Sciatic nerve (tissue), 2 donors: ENCODE measurements at regions of chr16 and their contacts with region 1.

Region 1: GRCh38 chr16:50210266-50211038 is 55.9 kb upstream of the ADCY7 start:
- DNase-seq: peak; percentile 85
- ATAC-seq: peak; percentile 94

Region 2: DNA sequence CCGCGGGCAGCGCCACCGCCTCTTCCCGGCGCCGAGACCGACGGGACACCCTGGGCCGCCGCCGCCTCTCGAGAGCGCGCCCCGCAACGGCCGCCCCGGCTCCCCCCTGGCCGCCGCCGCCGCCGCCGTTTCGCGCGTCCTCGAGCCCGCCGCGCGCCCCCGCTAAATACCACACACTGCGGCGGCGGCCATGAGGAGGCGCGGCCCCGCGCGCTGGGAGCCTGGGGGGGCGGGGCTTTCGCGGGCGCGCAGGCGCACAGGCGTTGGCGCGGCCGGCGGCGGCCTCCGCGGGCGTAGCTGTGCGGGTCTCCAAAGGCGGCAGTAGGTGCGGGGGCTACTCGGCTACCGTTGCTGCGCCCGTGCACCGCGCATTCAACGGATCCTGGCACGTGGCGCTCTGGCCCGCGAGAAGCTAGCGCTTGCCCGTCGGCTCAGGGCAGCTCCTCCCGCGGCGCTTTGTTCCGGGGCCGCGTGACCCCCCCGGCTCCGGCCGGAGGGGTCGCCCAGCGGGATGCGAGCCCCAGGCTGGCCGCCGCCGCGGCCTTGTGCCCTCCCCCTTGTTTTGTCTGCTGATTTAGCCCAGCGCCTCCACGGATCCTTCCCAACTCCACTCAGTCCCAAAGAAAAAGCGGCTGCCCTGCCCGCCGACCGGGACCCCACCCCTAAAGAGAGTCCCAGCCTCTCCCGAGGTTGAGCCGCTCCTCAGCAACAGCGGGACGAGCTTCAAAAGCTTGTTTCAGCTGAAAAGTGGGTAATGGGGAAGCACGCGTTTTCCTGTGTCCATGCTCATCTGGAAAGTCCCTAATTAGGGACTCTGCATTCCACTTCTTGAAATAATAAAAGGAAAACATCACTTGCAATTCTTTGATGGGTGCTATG is 1824.9 kb before region 1 on chr16 and contains the start of gene SIAH1:
- intact Hi-C with region 1: no loop called
- DNase-seq: peak; percentile 92
- ATAC-seq: peak; percentile 85
- total RNA-seq, gene SIAH1: 37.2 TPM

Region 3: DNA sequence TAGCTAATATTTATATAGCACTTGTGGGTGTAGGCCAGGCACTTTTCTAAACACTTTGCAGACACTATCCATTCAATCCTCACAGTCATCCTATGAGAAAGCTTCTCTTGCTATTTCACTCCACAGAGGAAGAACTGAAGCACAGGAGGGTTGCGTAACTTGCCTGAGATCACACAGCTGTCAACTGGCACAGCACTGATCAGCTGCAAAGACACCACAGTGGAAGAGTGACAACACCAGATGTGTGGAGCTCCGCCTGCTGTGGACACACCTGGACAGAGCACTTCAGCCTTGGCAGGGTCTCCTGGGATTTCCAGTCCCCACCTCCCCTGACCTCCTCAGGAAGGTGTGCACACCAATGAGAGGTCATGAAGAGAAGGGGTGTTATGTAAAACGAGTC is 198.7 kb before region 1 on chr16:
- intact Hi-C with region 1: no loop called
- DNase-seq: no peak
- ATAC-seq: no peak

Region 4: DNA sequence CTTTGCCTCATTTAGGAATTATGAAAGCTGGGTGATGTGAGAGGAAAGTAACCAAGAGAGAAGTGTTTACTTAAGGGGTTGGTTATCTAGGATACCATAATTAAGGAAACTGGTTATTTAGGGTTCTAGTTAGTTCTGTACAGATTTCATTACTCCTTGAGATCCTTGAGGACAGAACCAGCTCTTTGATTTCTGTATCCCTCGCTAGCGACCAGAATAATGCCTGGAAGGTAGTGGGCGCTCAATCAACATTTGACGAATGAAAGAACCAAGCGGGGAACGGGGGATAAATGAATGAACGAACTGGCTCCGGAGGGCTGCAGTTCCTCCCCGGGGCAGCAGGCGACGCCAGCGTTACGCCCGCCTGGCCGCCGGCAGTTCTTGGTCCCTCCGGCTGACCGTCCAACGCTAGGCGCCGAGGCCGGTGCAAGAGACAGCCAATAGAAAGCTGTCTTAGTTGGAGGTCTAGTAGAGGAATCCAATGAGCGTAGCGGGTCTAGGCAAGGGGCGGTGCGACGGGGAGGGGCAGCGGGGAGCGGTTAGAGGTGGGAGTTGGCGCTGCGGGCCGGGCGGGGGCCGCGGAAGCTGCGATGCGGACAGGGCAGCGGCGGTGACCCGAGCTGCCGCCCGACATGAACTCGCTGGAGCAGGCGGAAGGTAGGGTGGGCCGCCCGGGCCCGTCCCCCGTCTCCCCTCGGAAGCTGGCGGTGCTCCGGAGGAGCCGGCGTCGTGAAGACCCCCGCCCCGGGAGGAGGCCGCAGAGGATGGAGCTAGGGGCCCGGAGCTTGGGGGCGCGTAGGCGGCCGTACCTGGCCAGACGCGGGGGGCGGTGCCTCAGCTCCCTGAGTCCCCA is 185.5 kb before region 1 on chr16 and contains the start of gene CNEP1R1:
- intact Hi-C with region 1: loop called (anchors 10 kb)
- DNase-seq: peak; percentile 96
- ATAC-seq: peak; percentile 100
- total RNA-seq, gene CNEP1R1: 21.7 TPM

Region 5: DNA sequence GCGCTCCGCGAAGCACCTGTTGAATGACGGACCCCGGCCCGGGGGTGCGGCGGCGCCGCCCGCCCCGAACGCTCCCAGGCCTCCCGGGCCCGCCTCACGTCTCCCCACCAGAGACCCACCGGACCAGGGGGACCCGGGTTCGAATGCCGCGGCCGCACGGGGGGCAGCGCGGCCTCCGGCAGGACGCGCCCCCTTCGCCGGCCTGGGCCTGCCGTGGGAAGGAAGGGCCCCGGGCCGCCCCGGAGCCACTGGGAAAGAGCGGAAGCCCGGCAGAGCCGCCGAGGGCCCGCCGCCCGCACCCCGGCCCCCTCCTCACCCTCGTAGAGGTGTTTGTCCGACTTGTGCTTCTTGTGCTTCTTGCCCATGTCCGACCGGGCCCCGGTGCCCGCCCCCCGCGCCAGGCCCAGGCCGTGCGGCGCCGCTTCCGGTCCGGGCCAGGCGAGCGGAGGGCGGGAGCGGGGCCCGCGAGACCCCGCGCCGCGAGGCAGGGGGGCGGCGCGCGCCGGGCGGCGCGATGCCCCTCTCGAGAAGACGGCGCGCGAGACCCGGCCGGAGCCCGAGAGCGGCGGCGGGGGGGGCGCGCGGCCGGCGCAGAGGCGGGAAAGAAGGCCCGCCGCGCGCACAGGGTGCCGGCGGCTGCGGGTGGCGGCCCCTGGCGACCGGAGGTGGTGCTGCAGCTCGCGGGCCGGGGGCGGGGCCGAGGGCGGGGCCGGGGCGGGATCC is 158.1 kb after region 1 on chr16 and contains the start of gene BRD7:
- intact Hi-C with region 1: loop called (anchors 10 kb)
- DNase-seq: peak; percentile 72
- ATAC-seq: peak; percentile 78
- total RNA-seq, gene BRD7: 73.5 TPM